Sciatic nerve (tissue), 2 donors: ENCODE measurements at regions of chr11 and their contacts with region 1.

Region 1: GRCh38 chr11:117817368-117818040 is 7.0 kb downstream of the FXYD2 start:
- DNase-seq: peak; percentile 93
- ATAC-seq: peak; percentile 81

Region 2: GRCh38 chr11:117426269-117426685 is 391.2 kb before region 1 on chr11:
- intact Hi-C with region 1: loop called (anchors 2 kb)
- DNase-seq: peak; percentile 86
- ATAC-seq: peak; percentile 70

Region 3: DNA sequence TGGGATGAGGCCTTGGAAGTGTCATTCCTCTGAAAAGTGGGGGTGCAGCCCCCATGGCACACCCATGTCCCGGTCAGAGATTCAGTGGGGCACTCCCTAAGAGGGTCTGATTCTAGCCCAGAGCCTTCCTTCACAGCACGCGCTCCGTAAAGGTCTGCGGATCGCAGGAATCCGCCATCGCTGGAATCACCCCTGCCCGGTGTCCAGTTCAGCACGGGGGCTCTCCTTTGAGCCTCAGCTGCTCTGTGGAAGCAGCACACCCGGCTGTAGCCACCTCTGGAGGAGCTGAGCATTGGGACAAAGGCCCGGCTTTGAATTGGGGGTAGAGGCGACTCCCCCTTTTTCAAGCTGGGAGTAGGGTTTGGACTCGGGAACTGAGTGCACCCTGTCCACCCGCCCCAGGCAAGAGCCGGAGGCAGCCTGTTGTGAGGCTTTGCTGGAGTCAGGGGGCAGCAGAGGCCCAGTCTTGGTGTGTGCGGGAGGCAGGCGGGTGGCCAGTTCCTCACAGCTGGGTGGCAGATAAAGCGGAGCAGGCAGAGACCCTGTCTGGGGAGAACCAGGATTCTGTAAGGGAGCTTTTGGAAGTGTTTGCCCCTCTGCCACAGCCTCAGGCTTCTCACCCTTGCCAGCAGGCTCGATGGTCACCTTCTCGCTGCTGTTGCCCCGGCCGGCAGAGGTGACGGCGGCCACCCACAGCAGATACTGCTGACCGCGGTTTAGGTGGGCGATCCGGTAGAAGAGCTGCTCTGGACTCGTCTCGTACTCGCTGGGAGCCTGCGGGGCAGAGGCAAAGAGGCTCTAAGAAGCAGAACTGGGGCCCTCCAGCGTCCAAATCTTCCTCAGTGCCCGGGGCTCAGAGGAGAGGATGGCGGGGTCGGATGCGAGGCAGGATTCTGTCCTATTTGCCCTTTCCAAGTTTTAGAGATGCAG is 374.0 kb before region 1 on chr11:
- intact Hi-C with region 1: loop called (anchors 5 kb)
- DNase-seq: peak; percentile 73
- ATAC-seq: peak; percentile 93

Region 4: DNA sequence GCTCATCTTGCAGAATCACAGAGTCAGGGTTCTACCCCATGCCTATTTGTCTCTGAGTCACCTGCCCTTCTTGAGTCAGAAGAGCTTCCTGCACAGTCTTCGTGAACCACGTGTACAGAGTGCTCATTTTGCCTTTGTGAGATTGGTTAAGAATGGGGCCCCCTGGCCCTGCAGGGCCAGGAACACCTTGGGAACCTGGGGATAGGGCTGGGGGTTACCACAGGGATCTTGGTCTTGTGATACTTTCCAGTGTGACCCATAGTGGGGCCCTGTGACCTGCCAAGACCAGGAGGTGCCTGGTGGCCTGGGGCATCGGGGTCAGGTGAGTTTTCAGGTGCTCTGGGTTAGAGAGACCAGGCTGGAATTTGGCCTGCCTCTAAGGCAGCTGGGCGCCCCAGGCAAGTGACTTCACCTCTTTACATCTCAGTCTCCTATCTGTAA is 102.3 kb after region 1 on chr11:
- intact Hi-C with region 1: no loop called
- DNase-seq: no peak
- ATAC-seq: no peak